Panc1 (cell line): ENCODE measurements at regions of chr11 and their contacts with region 1.

Region 1: GRCh38 chr11:27472398-27473016 is at the start of gene LGR4:
- DNase-seq: no peak
- ATAC-seq: peak; percentile 91
- H3K4me3 ChIP-seq: peak within 1 kb of the TSS; percentile 67 to 71
- H3K27ac ChIP-seq: peak within 1 kb of the TSS; percentile 91
- H3K4me1 ChIP-seq: peaks cover 24% of the 10 kb centered on the region
- H3K27me3 ChIP-seq: no peaks in the 10 kb centered on the region
- CTCF ChIP-seq: no peak
- total RNA-seq, gene LGR4: 61.8 TPM

Region 2: GRCh38 chr11:26063915-26064314 is 1408.6 kb before region 1 on chr11:
- CTCF ChIA-PET with region 1: no interaction called
- POLR2A ChIA-PET with region 1: interaction called, 11 read pairs
- in situ Hi-C with region 1: no loop called
- intact Hi-C with region 1: no loop called
- DNase-seq: no peak
- ATAC-seq: no peak
- H3K4me3 ChIP-seq: no peak overlapping the region
- H3K27ac ChIP-seq: no peak overlapping the region
- H3K4me1 ChIP-seq: no peaks in the 10 kb centered on the region
- H3K27me3 ChIP-seq: no peaks in the 10 kb centered on the region
- CTCF ChIP-seq: no peak

Region 3: GRCh38 chr11:26778000-26778757 is 694.3 kb before region 1 on chr11:
- CTCF ChIA-PET with region 1: no interaction called
- POLR2A ChIA-PET with region 1: no interaction called
- in situ Hi-C with region 1: no loop called
- intact Hi-C with region 1: no loop called
- DNase-seq: no peak
- ATAC-seq: no peak
- H3K4me3 ChIP-seq: no peak overlapping the region
- H3K27ac ChIP-seq: no peak overlapping the region
- H3K4me1 ChIP-seq: no peaks in the 10 kb centered on the region
- H3K27me3 ChIP-seq: no peaks in the 10 kb centered on the region
- CTCF ChIP-seq: no peak

Region 4: GRCh38 chr11:27012234-27012921 is 460.1 kb before region 1 on chr11:
- CTCF ChIA-PET with region 1: no interaction called
- POLR2A ChIA-PET with region 1: no interaction called
- in situ Hi-C with region 1: no loop called
- intact Hi-C with region 1: no loop called
- DNase-seq: no peak
- ATAC-seq: no peak
- H3K4me3 ChIP-seq: no peak overlapping the region
- H3K27ac ChIP-seq: no peak overlapping the region
- H3K4me1 ChIP-seq: no peaks in the 10 kb centered on the region
- H3K27me3 ChIP-seq: no peaks in the 10 kb centered on the region; the same call in 1 of the 2 replicates
- CTCF ChIP-seq: no peak

Region 5: GRCh38 chr11:27381238-27381666 is 91.3 kb before region 1 on chr11:
- CTCF ChIA-PET with region 1: interaction called, 6 read pairs
- POLR2A ChIA-PET with region 1: interaction called, 14 read pairs
- in situ Hi-C with region 1: no loop called
- intact Hi-C with region 1: no loop called
- DNase-seq: no peak
- ATAC-seq: no peak
- H3K4me3 ChIP-seq: no peak overlapping the region
- H3K27ac ChIP-seq: no peak overlapping the region
- H3K4me1 ChIP-seq: peaks cover 17% of the 10 kb centered on the region
- H3K27me3 ChIP-seq: no peaks in the 10 kb centered on the region
- CTCF ChIP-seq: no peak

Region 6: GRCh38 chr11:27401833-27402316 is 70.6 kb before region 1 on chr11:
- CTCF ChIA-PET with region 1: no interaction called
- POLR2A ChIA-PET with region 1: interaction called, 3 read pairs
- in situ Hi-C with region 1: no loop called
- intact Hi-C with region 1: loop called (anchors 2 kb)
- DNase-seq: peak; percentile 91
- ATAC-seq: peak; percentile 93
- H3K4me3 ChIP-seq: peak overlapping the region in 1 of 2 experiments; percentile 36; a peak in 2 of 4 replicates
- H3K27ac ChIP-seq: peak overlapping the region; percentile 87
- H3K4me1 ChIP-seq: peaks cover 40% of the 10 kb centered on the region
- H3K27me3 ChIP-seq: no peaks in the 10 kb centered on the region
- CTCF ChIP-seq: no peak

Region 7: DNA sequence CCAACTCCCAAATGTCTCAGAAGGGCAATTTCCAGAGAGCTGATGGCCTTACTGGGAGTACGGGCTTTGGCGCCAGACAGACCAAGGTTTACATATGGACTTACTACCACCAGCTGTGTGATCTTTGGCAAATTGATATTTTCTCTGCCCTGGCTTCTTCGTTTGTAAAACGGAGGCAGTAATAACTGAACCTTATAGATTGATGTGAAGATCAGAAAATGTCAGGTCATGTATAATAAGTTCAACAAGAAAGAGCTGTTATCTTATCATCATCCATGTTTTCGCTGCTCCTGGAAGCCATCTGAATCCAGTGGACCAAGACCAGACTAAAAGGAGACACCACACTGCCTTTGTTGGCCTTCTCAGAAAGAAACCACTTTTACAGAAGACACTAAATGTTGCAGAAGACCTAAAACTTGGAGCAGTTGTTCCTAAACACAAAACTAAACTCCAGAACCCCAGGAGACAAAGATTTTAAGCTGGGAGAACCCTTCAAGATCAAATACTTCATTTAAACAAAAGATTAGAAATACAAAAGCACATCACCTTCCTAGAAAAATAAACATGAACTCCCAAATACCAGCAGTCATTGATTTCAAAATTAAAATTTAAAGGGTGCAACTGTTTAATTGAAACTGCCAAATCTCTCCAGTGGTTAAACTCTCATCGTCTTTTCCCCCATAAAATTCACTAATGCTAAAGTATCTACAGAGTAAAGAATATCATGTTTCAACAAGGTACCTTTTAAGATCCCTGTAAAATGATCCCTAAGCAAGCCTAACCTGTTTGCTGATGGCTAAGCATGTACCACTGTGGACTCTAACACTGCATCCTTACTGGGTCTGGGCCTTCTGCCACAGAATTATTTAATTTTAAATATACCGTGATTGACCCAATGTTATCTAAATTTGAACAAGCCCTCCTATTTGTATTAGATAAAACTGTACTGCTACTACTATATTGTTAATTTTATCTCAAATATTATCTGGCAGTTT is 56.0 kb before region 1 on chr11:
- CTCF ChIA-PET with region 1: no interaction called
- POLR2A ChIA-PET with region 1: interaction called, 18 read pairs
- in situ Hi-C with region 1: no loop called
- intact Hi-C with region 1: no loop called
- DNase-seq: no peak
- ATAC-seq: no peak; the same call in 1 of the 2 replicates
- H3K4me3 ChIP-seq: no peak overlapping the region
- H3K27ac ChIP-seq: peak overlapping the region; percentile 64
- H3K4me1 ChIP-seq: peaks cover 47% of the 10 kb centered on the region
- H3K27me3 ChIP-seq: no peaks in the 10 kb centered on the region
- CTCF ChIP-seq: no peak

Region 8: DNA sequence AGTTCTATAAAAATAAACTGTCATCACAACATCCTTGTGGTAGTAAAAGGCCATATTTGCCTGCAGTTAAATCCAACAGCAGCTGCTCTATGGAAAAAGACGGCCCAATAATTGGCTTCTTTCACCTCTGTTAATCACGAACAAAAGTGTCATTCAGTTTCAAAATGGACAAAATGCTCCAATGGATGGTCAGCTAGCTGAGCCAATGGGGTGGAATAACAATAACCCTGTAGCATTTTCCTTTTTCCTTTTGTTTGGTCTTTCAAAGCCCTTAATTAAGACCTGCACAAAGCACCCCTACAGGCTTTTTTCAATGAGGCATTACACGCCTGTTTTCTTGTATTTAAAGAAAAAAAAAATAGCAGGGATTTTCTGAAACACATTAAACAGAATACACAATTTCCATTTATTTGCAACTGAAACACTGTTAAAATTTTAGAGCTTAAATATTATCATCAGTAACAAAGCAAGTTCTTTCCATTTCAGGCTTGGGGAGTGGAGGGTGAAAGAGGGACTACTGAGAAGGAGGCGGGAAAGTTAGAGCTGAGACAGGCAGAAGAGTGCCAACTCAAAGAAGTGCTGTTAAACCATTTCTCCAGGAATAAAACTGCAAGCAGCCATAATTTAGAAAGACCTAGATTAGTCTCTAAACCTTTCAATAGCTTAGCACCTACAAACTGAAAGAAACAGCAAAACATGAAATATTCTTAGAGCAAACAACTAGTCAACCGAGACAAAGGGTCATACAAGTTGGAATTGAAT is 28.6 kb before region 1 on chr11:
- CTCF ChIA-PET with region 1: no interaction called
- POLR2A ChIA-PET with region 1: interaction called, 11 read pairs
- in situ Hi-C with region 1: no loop called
- intact Hi-C with region 1: no loop called
- DNase-seq: no peak
- ATAC-seq: no peak
- H3K4me3 ChIP-seq: no peak overlapping the region
- H3K27ac ChIP-seq: no peak overlapping the region; the same call in 1 of the 2 replicates
- H3K4me1 ChIP-seq: peaks cover 22% of the 10 kb centered on the region
- H3K27me3 ChIP-seq: no peaks in the 10 kb centered on the region
- CTCF ChIP-seq: no peak

Region 9: DNA sequence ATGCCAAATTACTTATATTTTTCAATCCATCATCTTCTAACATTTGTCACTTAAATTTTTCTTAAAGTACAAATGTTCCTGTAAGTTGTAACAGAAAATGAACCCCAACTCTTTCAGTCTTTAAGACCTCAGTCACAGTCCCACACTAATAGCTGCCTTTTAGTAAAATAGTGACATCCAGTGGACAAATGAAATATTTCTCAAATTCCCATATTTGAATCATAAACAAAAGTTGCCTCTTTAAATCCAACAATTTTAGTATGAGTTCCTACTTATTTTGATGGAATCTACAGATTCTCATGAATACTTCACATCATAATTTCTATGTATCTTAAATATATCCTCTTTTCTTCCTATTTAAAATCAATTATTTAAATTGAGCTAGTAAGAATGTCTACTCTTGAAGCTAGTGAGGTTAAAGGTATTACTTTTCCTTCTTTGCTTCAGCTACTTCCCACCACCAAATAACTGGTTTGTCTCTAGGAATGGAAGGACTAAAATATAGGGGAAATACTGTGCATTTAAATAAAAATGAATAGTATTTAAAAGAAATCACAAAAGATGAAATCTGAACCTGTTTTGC is 24.9 kb after region 1 on chr11:
- CTCF ChIA-PET with region 1: interaction called, 3 read pairs
- POLR2A ChIA-PET with region 1: interaction called, 17 read pairs
- in situ Hi-C with region 1: no loop called
- intact Hi-C with region 1: no loop called
- DNase-seq: no peak
- ATAC-seq: no peak
- H3K4me3 ChIP-seq: no peak overlapping the region
- H3K27ac ChIP-seq: no peak overlapping the region
- H3K4me1 ChIP-seq: no peaks in the 10 kb centered on the region
- H3K27me3 ChIP-seq: no peaks in the 10 kb centered on the region
- CTCF ChIP-seq: peak; percentile 59; the same call in 1 of the 2 replicates